ENCODE measurements at regions of chr18 and their contacts with region 1.

Region 1: GRCh38 chr18:64037812-64038414 is 68.0 kb downstream of the SERPINB8 start:
- DNase-seq: no peak
- H3K4me3 ChIP-seq: no peak overlapping the region
- H3K27ac ChIP-seq: no peak overlapping the region
- H3K4me1 ChIP-seq: no peaks in the 10 kb centered on the region
- H3K27me3 ChIP-seq: no peaks in the 10 kb centered on the region
- CTCF ChIP-seq: peak in 5 of 6 experiments; percentile 30 to 61 (median 52)
- POLR2A ChIP-seq: no peak

Region 2: DNA sequence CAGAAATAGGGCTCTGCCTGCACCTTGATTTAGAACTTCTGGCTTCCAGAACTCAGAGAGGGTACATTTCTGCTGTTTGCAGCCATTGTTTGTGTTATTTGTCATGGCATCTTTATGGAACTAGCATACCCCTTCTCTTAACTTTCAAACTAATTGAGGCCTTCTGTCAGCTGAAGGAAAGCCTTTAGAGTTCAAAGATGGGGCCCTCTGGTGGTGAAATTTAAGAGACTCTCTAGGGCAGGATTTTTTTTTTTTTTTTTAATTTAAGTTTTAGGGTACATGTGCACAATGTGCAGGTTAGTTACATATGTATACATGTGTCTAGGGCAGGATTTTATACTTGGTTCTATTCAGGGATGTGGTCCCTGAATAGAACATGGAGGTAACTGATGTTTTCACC is 371.6 kb after region 1 on chr18:
- intact Hi-C with region 1: loop called in 1 of 2 experiments (anchors 10 kb)
- DNase-seq: peak in 1 of 7 donors; percentile 2
- H3K4me3 ChIP-seq: no peak overlapping the region
- H3K27ac ChIP-seq: no peak overlapping the region
- H3K4me1 ChIP-seq: no peaks in the 10 kb centered on the region
- H3K27me3 ChIP-seq: no peaks in the 10 kb centered on the region
- CTCF ChIP-seq: peak in 3 of 6 experiments; percentile 33 to 49 (median 39)
- POLR2A ChIP-seq: no peak

Measured in adrenal gland (tissue), 19 donors.